Activated B cell treated with CpG ODN at 0.5 μM for 24 hours (primary cell): ENCODE measurements at regions of chr2 and their contacts with region 1.

Region 1: GRCh38 chr2:43131024-43131889 is 95.1 kb downstream of the ZFP36L2 start:
- DNase-seq: peak; percentile 62
- ATAC-seq: peak; percentile 61
- H3K4me3 Mint-ChIP-seq: peak overlapping the region; percentile 8
- H3K27ac Mint-ChIP-seq: peak overlapping the region; percentile 92
- H3K4me1 Mint-ChIP-seq: peaks cover 93% of the 10 kb centered on the region
- H3K27me3 Mint-ChIP-seq: no peaks in the 10 kb centered on the region
- CTCF ChIP-seq: no peak

Region 2: GRCh38 chr2:42828487-42829425 is 302.5 kb before region 1 on chr2:
- CTCF ChIA-PET with region 1: no interaction called
- POLR2A ChIA-PET with region 1: no interaction called
- intact Hi-C with region 1: loop called (anchors 2 kb)
- DNase-seq: peak; percentile 52
- ATAC-seq: peak; percentile 88
- H3K4me3 Mint-ChIP-seq: no peak overlapping the region
- H3K27ac Mint-ChIP-seq: no peak overlapping the region
- H3K4me1 Mint-ChIP-seq: peaks cover 14% of the 10 kb centered on the region
- H3K27me3 Mint-ChIP-seq: no peaks in the 10 kb centered on the region
- CTCF ChIP-seq: peak; percentile 65

Region 3: GRCh38 chr2:43000242-43001054 is 130.8 kb before region 1 on chr2:
- CTCF ChIA-PET with region 1: no interaction called
- POLR2A ChIA-PET with region 1: no interaction called
- intact Hi-C with region 1: no loop called
- DNase-seq: no peak
- ATAC-seq: peak; percentile 81
- H3K4me3 Mint-ChIP-seq: no peak overlapping the region
- H3K27ac Mint-ChIP-seq: peak overlapping the region; percentile 14
- H3K4me1 Mint-ChIP-seq: peaks cover 10% of the 10 kb centered on the region
- H3K27me3 Mint-ChIP-seq: peaks cover 5% of the 10 kb centered on the region
- CTCF ChIP-seq: no peak

Region 4: DNA sequence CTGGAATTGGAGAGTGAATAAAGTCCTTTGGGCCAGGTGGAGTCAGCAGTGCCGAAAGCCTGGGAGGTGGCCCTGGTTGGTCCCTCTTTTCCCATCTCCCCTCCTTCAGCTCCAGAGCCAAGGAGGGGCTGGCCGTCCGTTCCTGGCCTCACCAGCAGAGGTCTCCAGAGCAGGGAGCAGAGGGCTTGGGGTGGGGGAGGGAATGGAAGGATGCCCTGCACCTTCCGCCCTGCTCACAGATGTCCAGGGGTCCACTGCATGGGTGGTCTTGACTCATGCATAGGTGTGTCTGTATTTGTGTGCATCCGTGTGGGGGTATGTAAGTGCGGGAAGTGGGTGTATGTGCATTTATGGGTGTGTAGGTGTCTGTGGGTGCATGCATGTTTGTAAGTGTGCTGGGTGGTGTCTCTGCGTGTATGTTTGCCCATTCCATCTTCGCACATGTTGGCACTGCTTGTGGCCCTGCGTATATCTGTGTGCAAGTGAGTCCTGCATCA is 106.7 kb before region 1 on chr2:
- CTCF ChIA-PET with region 1: interaction called, 4 read pairs
- POLR2A ChIA-PET with region 1: no interaction called
- intact Hi-C with region 1: loop called (anchors 2 kb)
- DNase-seq: peak; percentile 25
- ATAC-seq: peak; percentile 74
- H3K4me3 Mint-ChIP-seq: no peak overlapping the region
- H3K27ac Mint-ChIP-seq: no peak overlapping the region
- H3K4me1 Mint-ChIP-seq: peaks cover 10% of the 10 kb centered on the region
- H3K27me3 Mint-ChIP-seq: peaks cover 2% of the 10 kb centered on the region
- CTCF ChIP-seq: no peak

Region 5: GRCh38 chr2:43158259-43158880 is 27.1 kb after region 1 on chr2:
- CTCF ChIA-PET with region 1: interaction called, 3 read pairs
- POLR2A ChIA-PET with region 1: interaction called, 5 read pairs
- intact Hi-C with region 1: loop called (anchors 1 kb)
- DNase-seq: no peak
- ATAC-seq: peak; percentile 9
- H3K4me3 Mint-ChIP-seq: peak overlapping the region; percentile 71
- H3K27ac Mint-ChIP-seq: peak overlapping the region; percentile 96
- H3K4me1 Mint-ChIP-seq: peaks cover 47% of the 10 kb centered on the region
- H3K27me3 Mint-ChIP-seq: no peaks in the 10 kb centered on the region
- CTCF ChIP-seq: no peak

Region 6: DNA sequence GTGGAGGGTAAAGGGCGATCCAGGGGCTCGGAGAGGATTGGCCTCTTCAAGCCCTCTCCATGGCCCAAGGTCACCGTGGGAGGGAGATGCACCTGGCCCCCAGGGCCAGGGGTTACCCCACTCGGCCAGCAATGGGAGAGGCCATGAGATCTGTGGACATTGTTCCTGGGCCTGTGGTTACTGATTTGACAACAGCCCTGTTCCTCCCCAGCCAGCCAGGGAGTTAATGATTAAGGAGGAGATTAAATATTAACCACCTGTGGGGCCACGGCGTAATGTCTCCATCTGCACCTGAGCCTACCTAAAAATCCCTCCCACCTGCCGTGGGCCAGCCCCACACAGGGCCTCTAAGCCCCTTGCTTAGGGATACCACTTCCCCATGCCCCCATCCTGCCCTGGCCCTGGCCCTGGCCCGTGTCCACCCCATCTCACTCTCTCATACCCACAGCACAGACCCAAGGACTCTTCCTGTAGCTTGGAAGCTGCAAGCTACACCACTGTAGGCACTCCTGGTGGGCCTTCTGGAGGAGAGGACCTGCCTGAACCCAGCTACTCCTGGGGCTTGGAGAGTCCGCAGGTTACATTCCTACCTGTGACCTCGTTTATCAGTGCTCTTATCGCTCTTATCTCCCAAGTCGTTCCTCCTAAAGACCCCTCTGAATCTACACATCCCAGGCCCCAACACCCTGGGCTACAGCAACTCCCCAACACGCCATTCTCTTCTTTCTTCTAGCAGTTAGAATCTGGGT is 63.0 kb after region 1 on chr2:
- CTCF ChIA-PET with region 1: no interaction called
- POLR2A ChIA-PET with region 1: interaction called, 14 read pairs
- intact Hi-C with region 1: loop called (anchors 1 kb)
- DNase-seq: no peak
- ATAC-seq: peak; percentile 6
- H3K4me3 Mint-ChIP-seq: peak overlapping the region; percentile 35
- H3K27ac Mint-ChIP-seq: peak overlapping the region; percentile 79
- H3K4me1 Mint-ChIP-seq: peaks cover 44% of the 10 kb centered on the region
- H3K27me3 Mint-ChIP-seq: no peaks in the 10 kb centered on the region
- CTCF ChIP-seq: no peak

Region 7: DNA sequence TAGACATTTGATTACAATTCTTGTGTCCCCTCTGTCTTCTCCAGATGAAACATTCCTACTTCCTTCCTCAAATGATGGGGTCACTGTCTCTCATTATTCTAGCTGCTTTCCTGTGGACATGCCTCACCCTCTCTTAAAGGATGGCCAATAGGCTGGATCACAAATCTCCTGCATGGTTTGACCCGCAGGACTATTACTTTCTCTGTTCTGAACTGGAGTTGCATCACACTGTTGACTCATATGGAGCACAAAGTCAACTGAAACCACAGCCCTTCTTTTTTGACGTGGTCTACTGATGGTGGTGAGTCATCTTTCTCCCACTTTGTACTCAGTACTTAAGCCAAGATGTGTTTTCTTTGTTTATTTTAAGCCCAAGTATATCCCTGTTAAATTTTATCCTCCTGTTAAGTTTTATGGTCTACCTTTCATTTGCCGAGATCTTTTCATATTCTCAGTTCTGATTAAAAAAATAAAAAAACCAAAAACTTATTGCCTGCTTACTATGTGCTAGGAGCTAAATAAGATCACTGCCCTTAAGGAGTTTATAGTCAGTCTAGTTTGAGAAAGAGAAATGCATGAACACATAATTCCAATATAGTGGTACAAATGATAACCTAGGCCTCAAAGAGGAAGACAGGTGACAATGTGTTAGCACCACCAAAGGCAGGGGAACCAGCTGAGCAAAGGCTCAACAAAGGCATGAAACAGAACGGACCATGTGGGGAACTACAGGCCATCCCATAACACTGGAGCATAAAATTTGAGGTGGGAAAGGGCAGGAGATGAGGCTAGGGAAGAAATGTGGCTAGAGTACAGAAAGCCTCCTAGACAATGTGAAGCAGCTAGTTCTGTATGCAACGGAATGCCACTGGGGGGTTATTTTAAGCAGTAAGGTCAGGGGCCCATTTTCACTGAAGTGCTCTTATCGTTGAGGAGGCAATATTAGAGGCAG is 162.8 kb after region 1 on chr2:
- CTCF ChIA-PET with region 1: no interaction called
- POLR2A ChIA-PET with region 1: interaction called, 10 read pairs
- intact Hi-C with region 1: loop called (anchors 5 kb)
- DNase-seq: no peak
- ATAC-seq: peak; percentile 94
- H3K4me3 Mint-ChIP-seq: no peak overlapping the region
- H3K27ac Mint-ChIP-seq: peak overlapping the region; percentile 92
- H3K4me1 Mint-ChIP-seq: peaks cover 18% of the 10 kb centered on the region
- H3K27me3 Mint-ChIP-seq: no peaks in the 10 kb centered on the region
- CTCF ChIP-seq: no peak

Region 8: GRCh38 chr2:43542285-43542937 is 411.2 kb after region 1 on chr2:
- CTCF ChIA-PET with region 1: interaction called, 3 read pairs
- POLR2A ChIA-PET with region 1: no interaction called
- intact Hi-C with region 1: loop called (anchors 5 kb)
- DNase-seq: no peak
- ATAC-seq: peak; percentile 40
- H3K4me3 Mint-ChIP-seq: no peak overlapping the region
- H3K27ac Mint-ChIP-seq: no peak overlapping the region
- H3K4me1 Mint-ChIP-seq: peaks cover 18% of the 10 kb centered on the region
- H3K27me3 Mint-ChIP-seq: no peaks in the 10 kb centered on the region
- CTCF ChIP-seq: no peak